Activated T-helper 1 cell treated with anti-CD3 and anti-CD28 coated beads, Interleukin-12 subunit alpha, Interleukin-12 subunit beta, Interleukin-2, Interleukin-4 antibody, amounts not matched to agents 30 ng/mL and 10 ng/mL and 1 ng/mL, durations not matched to agents 14 hours and 24 hours and 36 hours (primary cell): ENCODE measurements at regions of chr11 and their contacts with region 1.

Region 1: GRCh38 chr11:14454861-14455632 is 44.6 kb downstream of the COPB1 start:
- DNase-seq: no peak
- H3K4me3 Mint-ChIP-seq: no peak overlapping the region
- H3K27ac Mint-ChIP-seq: no peak overlapping the region
- H3K4me1 Mint-ChIP-seq: no peaks in the 10 kb centered on the region
- H3K27me3 Mint-ChIP-seq: no peaks in the 10 kb centered on the region

Region 2: DNA sequence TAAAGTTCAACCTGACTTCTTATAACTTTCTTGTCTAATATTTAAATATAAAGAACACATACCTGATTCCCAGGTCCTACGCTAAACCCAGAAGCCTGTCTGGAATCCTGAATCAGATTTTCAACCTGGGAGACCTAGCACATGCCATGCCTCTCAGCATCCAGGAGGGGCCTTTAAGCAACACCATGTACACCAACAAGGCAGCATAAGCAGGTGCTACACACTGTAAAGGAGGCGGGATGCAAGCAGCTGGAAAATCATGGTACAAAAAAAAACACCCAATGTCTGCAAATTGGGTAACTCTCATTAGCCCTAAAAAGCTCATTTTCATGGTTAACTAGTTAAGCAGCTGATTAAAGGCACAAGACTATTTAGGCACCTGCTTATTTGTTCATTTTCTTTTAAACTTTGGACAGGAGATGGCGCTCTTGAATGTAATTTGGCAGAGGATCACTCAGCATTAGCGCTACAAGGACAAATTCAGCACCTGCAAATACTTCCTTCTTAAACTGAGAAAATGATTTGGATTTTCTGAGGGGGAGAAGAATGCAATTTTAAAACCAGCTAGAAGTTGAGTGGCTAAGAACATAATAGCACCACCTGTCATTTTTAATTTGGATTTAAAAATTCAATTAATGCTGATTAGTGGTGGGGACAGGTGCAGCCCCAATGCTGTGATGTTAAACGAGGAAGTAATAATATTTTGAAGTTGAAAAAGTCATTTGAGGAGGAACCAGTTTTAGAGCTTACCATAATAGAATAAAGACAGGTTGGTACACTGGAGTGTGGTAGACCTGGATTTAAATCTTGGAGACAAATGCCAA is 682.6 kb before region 1 on chr11:
- intact Hi-C with region 1: loop called (anchors 10 kb)
- DNase-seq: peak; percentile 22
- H3K4me3 Mint-ChIP-seq: no peak overlapping the region
- H3K27ac Mint-ChIP-seq: no peak overlapping the region
- H3K4me1 Mint-ChIP-seq: no peaks in the 10 kb centered on the region
- H3K27me3 Mint-ChIP-seq: peaks cover 14% of the 10 kb centered on the region

Region 3: GRCh38 chr11:13955971-13956421 is 499.1 kb before region 1 on chr11:
- intact Hi-C with region 1: loop called (anchors 5 kb)
- DNase-seq: peak; percentile 20
- H3K4me3 Mint-ChIP-seq: no peak overlapping the region
- H3K27ac Mint-ChIP-seq: no peak overlapping the region
- H3K4me1 Mint-ChIP-seq: no peaks in the 10 kb centered on the region
- H3K27me3 Mint-ChIP-seq: peaks cover 39% of the 10 kb centered on the region

Region 4: GRCh38 chr11:14300661-14301304 is 154.3 kb before region 1 on chr11:
- intact Hi-C with region 1: loop called (anchors 1 kb)
- DNase-seq: peak; percentile 25
- H3K4me3 Mint-ChIP-seq: no peak overlapping the region
- H3K27ac Mint-ChIP-seq: no peak overlapping the region
- H3K4me1 Mint-ChIP-seq: peaks cover 17% of the 10 kb centered on the region
- H3K27me3 Mint-ChIP-seq: no peaks in the 10 kb centered on the region

Region 5: DNA sequence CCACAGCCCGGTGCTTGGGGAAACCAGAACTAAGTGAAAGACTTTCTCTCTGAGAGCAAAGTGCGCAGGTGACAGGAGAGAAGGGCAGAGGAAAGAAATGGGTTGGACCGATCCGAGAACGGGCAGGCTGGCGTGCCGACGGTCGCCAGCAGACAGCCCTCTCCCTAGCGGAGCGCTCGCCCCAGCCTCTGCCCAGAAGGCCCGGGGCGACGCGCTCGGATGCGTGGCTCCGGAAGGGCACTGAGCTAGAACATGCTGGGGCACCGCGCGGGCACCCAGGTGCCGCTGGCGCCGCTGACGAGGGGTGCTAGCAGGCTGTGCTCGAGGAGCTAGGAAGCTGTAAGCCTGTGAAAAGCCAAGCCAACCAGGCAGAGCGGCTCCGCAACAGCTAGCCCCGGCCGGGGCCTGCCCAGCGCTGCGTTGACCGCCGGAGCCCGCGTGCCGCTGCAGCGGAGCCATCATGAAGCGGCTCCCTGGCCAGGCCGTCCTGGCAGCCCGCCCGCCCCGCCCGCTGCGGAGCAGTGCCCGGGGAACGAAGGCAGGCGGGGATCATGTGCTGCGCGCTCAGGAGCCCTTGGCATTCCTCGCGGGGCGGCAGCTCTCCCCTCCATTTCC is 74.0 kb before region 1 on chr11:
- intact Hi-C with region 1: loop called (anchors 5 kb)
- DNase-seq: peak; percentile 21
- H3K4me3 Mint-ChIP-seq: peak overlapping the region; percentile 74
- H3K27ac Mint-ChIP-seq: peak overlapping the region; percentile 13
- H3K4me1 Mint-ChIP-seq: peaks cover 19% of the 10 kb centered on the region
- H3K27me3 Mint-ChIP-seq: peaks cover 30% of the 10 kb centered on the region